Endothelial cell of umbilical vein (primary cell): ENCODE measurements at regions of chr2 and their contacts with region 1.

Region 1: GRCh38 chr2:221444106-221444505 is 128.0 kb downstream of the EPHA4 start:
- DNase-seq: peak; percentile 92
- H3K4me3 ChIP-seq: no peak overlapping the region
- H3K27ac ChIP-seq: peak overlapping the region; percentile 95
- H3K4me1 ChIP-seq: peaks cover 31% of the 10 kb centered on the region
- H3K27me3 ChIP-seq: no peaks in the 10 kb centered on the region
- CTCF ChIP-seq: no peak
- POLR2A ChIP-seq: no peak

Region 2: GRCh38 chr2:221235941-221236340 is 208.2 kb before region 1 on chr2:
- CTCF ChIA-PET with region 1: no interaction called
- POLR2A ChIA-PET with region 1: no interaction called
- dilution Hi-C with region 1: no loop called
- intact Hi-C with region 1: loop called (anchors 5 kb)
- DNase-seq: peak; percentile 88
- H3K4me3 ChIP-seq: peak overlapping the region in 1 of 3 experiments; percentile 21
- H3K27ac ChIP-seq: peak overlapping the region; percentile 83
- H3K4me1 ChIP-seq: peaks cover 15% of the 10 kb centered on the region
- H3K27me3 ChIP-seq: no peaks in the 10 kb centered on the region
- CTCF ChIP-seq: no peak
- POLR2A ChIP-seq: no peak

Region 3: GRCh38 chr2:221465776-221466175 is 21.7 kb after region 1 on chr2:
- CTCF ChIA-PET with region 1: interaction called, 8 read pairs
- POLR2A ChIA-PET with region 1: interaction called, 5 read pairs
- dilution Hi-C with region 1: no loop called
- intact Hi-C with region 1: loop called (anchors 1 kb)
- DNase-seq: no peak
- H3K4me3 ChIP-seq: no peak overlapping the region
- H3K27ac ChIP-seq: no peak overlapping the region
- H3K4me1 ChIP-seq: peaks cover 20% of the 10 kb centered on the region
- H3K27me3 ChIP-seq: no peaks in the 10 kb centered on the region
- CTCF ChIP-seq: no peak
- POLR2A ChIP-seq: no peak

Region 4: DNA sequence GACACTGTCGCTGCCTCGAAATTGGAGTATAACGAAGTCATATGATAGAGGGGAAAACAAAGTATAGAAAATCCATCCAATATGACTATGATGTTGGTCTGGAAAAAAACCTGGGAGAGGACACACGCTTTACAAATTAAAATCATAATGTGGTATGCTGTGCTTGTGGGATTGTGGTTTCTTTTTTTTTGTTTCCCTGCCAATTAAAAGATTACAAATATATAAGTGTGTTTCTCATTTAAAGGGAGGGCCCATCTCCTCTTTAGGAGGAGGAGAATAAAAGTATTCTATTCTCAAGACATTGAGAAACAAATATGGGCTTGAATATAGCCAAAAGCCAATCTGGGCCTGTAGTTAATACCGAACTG is 41.4 kb after region 1 on chr2:
- CTCF ChIA-PET with region 1: no interaction called
- POLR2A ChIA-PET with region 1: no interaction called
- dilution Hi-C with region 1: no loop called
- intact Hi-C with region 1: no loop called
- DNase-seq: no peak
- H3K4me3 ChIP-seq: no peak overlapping the region
- H3K27ac ChIP-seq: no peak overlapping the region
- H3K4me1 ChIP-seq: no peaks in the 10 kb centered on the region
- H3K27me3 ChIP-seq: no peaks in the 10 kb centered on the region
- CTCF ChIP-seq: no peak
- POLR2A ChIP-seq: no peak

Region 5: GRCh38 chr2:221517696-221518151 is 73.6 kb after region 1 on chr2:
- CTCF ChIA-PET with region 1: interaction called, 4 read pairs
- POLR2A ChIA-PET with region 1: no interaction called
- dilution Hi-C with region 1: no loop called
- intact Hi-C with region 1: loop called (anchors 5 kb)
- DNase-seq: peak; percentile 72
- H3K4me3 ChIP-seq: no peak overlapping the region
- H3K27ac ChIP-seq: peak overlapping the region; percentile 70
- H3K4me1 ChIP-seq: peaks cover 33% of the 10 kb centered on the region
- H3K27me3 ChIP-seq: no peaks in the 10 kb centered on the region
- CTCF ChIP-seq: no peak
- POLR2A ChIP-seq: no peak

Region 6: DNA sequence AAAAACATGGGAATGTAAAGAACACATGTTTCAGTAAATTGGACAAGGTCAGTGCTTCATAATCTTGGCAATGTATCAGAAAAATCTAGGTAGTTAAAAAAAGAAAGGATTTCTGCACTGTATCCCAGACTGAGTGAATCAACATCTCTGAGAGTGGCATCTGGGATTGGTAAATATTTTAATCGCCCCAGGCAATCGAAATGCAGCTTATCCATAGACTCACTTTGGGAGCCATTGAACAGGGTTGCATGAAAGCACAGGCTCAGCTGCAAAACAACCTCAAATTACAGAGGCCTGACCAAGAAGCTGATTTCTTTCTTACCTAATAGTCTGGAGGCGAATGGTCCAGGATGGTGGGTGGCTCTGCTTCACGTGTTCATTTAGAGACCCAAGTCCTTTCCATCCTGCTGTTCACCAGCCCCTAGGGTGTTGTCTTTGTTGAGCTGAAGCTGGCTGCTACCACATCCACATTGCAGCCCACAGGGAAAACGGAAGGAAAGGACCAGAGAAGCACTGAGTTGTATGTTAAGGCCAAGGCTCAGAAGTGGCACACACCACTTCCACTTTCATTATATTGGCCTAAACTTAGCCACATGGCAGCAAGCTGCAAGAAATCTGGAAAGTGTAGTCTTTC is 1286.4 kb after region 1 on chr2:
- CTCF ChIA-PET with region 1: no interaction called
- POLR2A ChIA-PET with region 1: no interaction called
- dilution Hi-C with region 1: no loop called
- intact Hi-C with region 1: loop called (anchors 5 kb)
- DNase-seq: no peak
- H3K4me3 ChIP-seq: no peak overlapping the region
- H3K27ac ChIP-seq: no peak overlapping the region
- H3K4me1 ChIP-seq: peaks cover 6% of the 10 kb centered on the region
- H3K27me3 ChIP-seq: no peaks in the 10 kb centered on the region
- CTCF ChIP-seq: no peak
- POLR2A ChIP-seq: no peak